Adrenal gland (tissue), 19 donors: ENCODE measurements at regions of chrX and their contacts with region 1.

Region 1: DNA sequence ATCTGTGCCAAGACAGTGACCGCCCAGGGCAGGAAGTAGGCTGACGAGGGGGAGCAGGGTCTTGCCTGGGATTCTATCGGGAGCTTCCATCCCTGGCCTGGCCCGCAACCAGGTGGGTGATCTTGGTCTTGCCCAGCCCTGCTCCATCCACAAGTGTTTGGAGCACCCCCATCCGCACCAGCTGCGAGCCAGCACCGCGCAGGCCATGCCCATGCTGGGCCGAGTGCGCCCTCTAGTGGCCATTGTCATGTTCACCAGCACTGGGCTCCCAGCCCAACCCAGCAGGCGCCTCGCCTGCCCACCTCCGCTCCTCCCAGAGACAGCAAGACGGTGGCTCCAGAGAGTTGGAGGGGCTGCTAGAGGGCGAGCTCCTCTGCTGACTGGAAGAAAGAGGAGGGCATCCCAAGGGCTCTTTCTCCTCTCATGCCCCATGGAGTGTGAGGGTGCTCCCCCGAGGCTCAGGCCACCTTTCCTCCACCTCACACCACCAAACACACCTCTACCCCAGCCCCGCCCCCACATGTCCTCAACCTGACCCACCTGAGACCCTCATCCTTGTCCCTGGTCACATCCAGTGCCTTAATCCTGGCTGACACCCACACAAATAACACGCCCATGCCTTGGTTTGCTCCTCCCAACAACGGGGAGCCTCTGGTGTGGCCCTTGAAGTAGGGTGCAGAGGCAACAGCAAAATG is 9.8 kb upstream of the ATP2B3 start:
- DNase-seq: peak; percentile 78 to 90 (median 83)
- H3K4me3 ChIP-seq: no peak overlapping the region
- H3K27ac ChIP-seq: no peak overlapping the region
- H3K4me1 ChIP-seq: no peaks in the 10 kb centered on the region
- H3K27me3 ChIP-seq: peaks cover 9% of the 10 kb centered on the region
- CTCF ChIP-seq: peak; percentile 75 to 93 (median 86)
- POLR2A ChIP-seq: no peak

Region 2: GRCh38 chrX:153460845-153461244 is 46.8 kb before region 1 on chrX:
- intact Hi-C with region 1: loop called in 1 of 2 experiments (anchors 5 kb)
- DNase-seq: peak; percentile 39 to 61 (median 46)
- H3K4me3 ChIP-seq: no peak overlapping the region
- H3K27ac ChIP-seq: no peak overlapping the region
- H3K4me1 ChIP-seq: no peaks in the 10 kb centered on the region
- H3K27me3 ChIP-seq: no peaks in the 10 kb centered on the region
- CTCF ChIP-seq: peak in 5 of 6 experiments; percentile 35 to 60 (median 50)
- POLR2A ChIP-seq: no peak